AG04450 (cell line): ENCODE measurements at regions of chr16 and their contacts with region 1.

Region 1: GRCh38 chr16:73058221-73058615 is 10.3 kb upstream of the ZFHX3 start:
- DNase-seq: no peak
- H3K4me3 ChIP-seq: peak overlapping the region; percentile 72
- H3K27ac ChIP-seq: no peak overlapping the region
- H3K27me3 ChIP-seq: no peaks in the 10 kb centered on the region
- CTCF ChIP-seq: no peak

Region 2: DNA sequence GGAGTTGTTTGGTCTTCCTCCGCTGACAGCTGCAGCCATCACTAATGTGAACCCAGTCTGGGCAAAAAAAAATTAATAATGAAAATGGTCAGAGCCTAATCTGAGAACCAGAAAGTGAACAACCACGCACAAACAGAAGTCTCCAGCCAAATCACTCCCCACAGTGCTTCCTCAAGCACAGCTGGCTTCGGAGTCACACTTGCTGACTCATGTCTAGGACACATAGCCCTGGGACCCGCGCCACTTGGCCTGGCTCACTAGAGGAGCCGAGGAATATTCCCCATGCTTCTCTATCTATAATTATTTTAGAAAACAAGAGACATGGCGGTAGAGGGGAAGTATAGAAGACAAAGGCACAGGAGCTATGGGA is 119.4 kb before region 1 on chr16:
- CTCF ChIA-PET with region 1: interaction called, 13 read pairs
- POLR2A ChIA-PET with region 1: no interaction called
- DNase-seq: peak; percentile 23
- H3K4me3 ChIP-seq: 0 out of 2 replicates have a peak overlapping the region, but pooled peaks have one; percentile 20
- H3K27ac ChIP-seq: peak overlapping the region; percentile 80
- H3K27me3 ChIP-seq: no peaks in the 10 kb centered on the region
- CTCF ChIP-seq: no peak

Region 3: GRCh38 chr16:73068541-73069401 is 10.6 kb after region 1 on chr16:
- CTCF ChIA-PET with region 1: interaction called, 4 read pairs
- POLR2A ChIA-PET with region 1: interaction called, 13 read pairs
- DNase-seq: peak; percentile 94
- H3K4me3 ChIP-seq: peak overlapping the region; percentile 21; the same call in 1 of the 2 replicates
- H3K27ac ChIP-seq: peak overlapping the region; percentile 100
- H3K27me3 ChIP-seq: no peaks in the 10 kb centered on the region
- CTCF ChIP-seq: 0 out of 2 replicates have a peak, but pooled peaks have one; percentile 6